ENCODE measurements at regions of chrX and their contacts with region 1.

Region 1: DNA sequence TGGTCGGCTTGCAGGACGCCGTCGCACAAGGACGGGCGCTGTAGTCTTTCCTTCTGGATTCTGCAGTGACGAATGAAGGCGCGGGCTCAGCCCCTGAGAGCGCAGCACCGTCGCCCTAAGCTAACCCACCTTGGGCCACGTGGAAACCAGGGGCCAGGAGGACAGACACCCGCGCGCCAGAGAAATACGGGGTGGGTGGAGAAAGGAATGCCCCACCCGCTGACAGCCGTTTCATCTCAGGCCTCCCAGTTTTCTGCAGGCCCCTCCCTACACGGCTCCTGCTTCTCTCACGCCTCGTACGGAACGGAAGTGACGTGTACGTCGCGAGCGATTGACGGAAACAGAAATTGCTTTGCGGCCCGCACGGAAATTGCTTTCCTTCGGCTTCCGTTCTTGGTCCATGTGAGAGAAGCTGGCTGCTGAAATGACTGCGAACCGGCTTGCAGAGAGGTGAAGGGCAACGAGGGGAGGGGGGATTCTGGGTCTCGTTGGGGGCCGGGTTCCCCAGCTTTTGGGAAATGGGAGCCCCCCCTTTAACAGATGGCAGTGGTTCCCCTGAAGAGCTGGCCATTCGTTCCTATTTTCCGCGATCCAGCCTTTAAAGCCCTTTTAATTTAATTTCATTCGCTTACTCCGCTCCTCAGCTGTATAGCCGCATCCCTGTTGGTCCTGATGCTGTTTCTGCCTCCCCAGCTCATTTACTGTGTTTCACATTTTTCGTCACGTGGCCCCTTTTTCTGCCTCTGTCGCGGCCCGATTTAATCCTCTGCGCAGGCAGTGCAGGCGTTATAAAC is at the start of gene UTP14A:
- DNase-seq: peak; percentile 44 to 86 (median 78)
- ATAC-seq: peak; percentile 98
- H3K4me3 ChIP-seq: peak within 1 kb of the TSS; percentile 85
- H3K4me3 Mint-ChIP-seq: peak within 1 kb of the TSS; percentile 85 to 97 (median 92)
- H3K27ac ChIP-seq: peak within 1 kb of the TSS; percentile 76
- H3K27ac Mint-ChIP-seq: peak within 1 kb of the TSS; percentile 81 to 95 (median 90)
- H3K4me1 ChIP-seq: peaks cover 3 to 8% of the 10 kb centered on the region in 2 donors
- H3K4me1 Mint-ChIP-seq: peaks cover 0 to 17% (median 4%) of the 10 kb centered on the region in 7 donors
- H3K27me3 ChIP-seq: no peaks in the 10 kb centered on the region
- H3K27me3 Mint-ChIP-seq: no peaks in the 10 kb centered on the region
- total RNA-seq, gene UTP14A: 11.3 to 28.6 (median 22.4) TPM

Region 2: DNA sequence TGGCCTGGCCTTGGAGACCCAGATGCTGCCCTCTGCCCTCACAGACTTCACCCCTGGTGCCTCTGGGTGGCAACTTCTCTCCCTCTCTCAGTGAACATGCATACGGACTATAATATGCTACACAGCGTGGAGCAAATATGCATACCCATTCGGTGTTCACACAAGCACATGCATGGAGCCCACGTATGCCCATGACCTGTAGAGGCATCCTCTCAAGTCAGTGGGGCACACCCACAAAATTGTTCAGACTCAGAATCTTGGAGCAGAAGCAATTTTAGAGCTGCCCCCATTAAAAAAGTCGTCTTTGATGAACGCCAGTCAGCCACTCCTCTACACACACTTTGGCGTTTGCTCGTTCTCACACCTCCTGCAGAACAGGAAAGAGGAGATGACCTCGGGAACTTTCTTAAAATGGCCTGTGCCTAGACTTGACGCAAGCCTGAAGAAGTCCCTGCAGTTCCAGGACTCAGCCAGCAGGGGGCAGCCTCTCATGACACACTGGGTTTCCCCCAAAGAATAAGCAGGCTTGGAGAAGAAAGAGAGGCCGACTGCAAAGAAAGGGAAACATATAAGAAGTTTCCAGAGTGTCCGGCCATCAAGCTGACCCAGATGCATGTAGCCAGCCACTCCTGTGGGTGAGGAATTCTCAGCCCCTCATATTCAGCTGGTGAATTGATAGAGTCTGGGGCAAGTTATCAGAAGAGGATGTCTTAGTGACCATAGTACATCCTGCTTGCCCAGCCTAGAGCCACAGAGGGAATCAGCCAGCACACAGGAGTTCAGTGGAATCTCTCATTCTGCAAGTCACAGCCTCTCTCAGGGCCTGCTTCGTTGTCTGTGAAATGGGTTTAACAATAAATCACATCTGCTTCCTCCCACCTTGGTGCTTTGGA is 268.5 kb before region 1 on chrX:
- CTCF ChIA-PET with region 1: interaction called, 3 read pairs
- POLR2A ChIA-PET with region 1: no interaction called
- intact Hi-C with region 1: loop called in 1 of 2 experiments (anchors 5 kb)
- DNase-seq: peak; percentile 48 to 80 (median 63)
- ATAC-seq: peak; percentile 92
- H3K4me3 ChIP-seq: no peak overlapping the region
- H3K4me3 Mint-ChIP-seq: no peak overlapping the region
- H3K27ac ChIP-seq: no peak overlapping the region
- H3K27ac Mint-ChIP-seq: peak overlapping the region in 3 of 9 donors; percentile 34 to 68 (median 55)
- H3K4me1 ChIP-seq: peaks cover 0 to 4% of the 10 kb centered on the region in 2 donors
- H3K4me1 Mint-ChIP-seq: peaks cover 0 to 10% (median 0%) of the 10 kb centered on the region in 7 donors
- H3K27me3 ChIP-seq: no peaks in the 10 kb centered on the region
- H3K27me3 Mint-ChIP-seq: no peaks in the 10 kb centered on the region

Region 3: DNA sequence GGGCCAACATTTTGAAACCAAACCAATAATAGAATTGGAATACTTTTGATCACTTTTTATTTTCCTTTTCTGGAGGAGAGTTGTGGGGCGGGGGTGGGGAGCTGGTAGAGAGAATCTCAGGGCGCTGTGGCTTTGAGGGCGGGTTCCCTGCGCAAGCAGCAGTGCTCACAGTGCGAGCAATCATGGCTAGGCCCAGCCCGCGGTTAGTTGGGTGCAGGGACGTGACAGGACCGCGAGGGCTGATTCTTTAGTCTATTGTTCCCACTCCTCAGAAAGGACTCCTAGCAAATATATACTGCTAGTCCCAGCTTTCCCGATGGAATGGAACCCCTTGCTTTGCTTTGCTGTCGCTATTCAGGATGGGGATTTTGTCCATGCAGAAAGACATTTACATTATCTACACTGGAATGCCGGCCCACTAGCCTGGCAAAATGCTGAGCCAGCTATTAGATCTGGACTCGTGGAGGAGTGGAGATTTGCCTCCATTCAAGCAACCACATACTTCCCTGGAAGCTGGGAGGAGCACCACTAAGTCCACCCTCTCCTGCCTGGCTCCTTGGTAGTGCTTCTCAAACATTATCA is 227.3 kb before region 1 on chrX:
- CTCF ChIA-PET with region 1: no interaction called
- POLR2A ChIA-PET with region 1: no interaction called
- intact Hi-C with region 1: loop called in 1 of 2 experiments (anchors 1 kb)
- DNase-seq: peak in 7 of 9 donors; percentile 6 to 40 (median 34)
- ATAC-seq: peak; percentile 78
- H3K4me3 ChIP-seq: peak overlapping the region; percentile 53
- H3K4me3 Mint-ChIP-seq: peak overlapping the region; percentile 62 to 85 (median 70)
- H3K27ac ChIP-seq: peak overlapping the region; percentile 38
- H3K27ac Mint-ChIP-seq: peak overlapping the region in 7 of 9 donors; percentile 5 to 91 (median 48)
- H3K4me1 ChIP-seq: peaks cover 5 to 14% of the 10 kb centered on the region in 2 donors
- H3K4me1 Mint-ChIP-seq: peaks cover 10 to 36% (median 23%) of the 10 kb centered on the region in 7 donors
- H3K27me3 ChIP-seq: no peaks in the 10 kb centered on the region
- H3K27me3 Mint-ChIP-seq: peaks cover 0 to 21% (median 0%) of the 10 kb centered on the region in 5 donors

Region 4: DNA sequence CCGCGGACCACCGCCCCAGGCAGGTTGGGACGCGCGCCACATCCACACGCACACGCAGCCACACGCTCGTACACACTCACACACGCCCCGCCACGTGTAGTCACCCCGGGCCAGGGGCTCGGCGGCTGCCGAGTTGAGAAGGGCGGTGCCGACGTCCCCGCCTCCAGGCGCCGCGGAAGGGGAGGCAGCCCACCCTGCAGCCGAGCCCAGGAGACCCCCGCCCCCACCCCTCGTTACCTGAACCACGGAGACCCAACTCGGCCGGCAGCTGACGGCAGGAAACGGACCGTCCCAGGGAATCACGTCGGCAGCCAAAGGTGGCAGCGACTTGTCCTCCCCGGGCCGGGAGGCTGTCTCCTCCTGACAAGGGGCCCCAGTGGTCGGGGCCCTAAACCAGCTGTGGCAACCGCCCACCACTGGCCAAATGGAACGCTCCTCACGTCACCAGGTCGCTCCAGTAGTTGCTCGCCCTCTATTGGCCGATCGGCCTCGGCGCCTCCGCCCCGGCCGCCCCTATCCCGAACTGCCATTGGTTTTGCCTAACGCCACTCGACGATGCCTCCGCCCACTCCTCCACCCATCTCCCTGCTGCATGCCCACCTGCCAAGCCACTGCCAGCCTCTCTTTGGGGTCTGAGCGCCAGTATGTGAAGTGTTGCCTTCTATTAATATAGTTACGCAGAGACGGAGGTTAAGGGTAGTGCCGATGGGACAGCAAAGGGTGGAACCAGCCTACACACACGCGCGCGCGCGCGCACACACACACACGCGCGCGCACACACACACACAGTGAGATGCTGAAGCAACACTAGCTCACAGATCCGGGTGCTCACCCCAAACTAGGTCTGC is 62.3 kb before region 1 on chrX and contains the start of gene ZDHHC9:
- CTCF ChIA-PET with region 1: no interaction called
- POLR2A ChIA-PET with region 1: interaction called, 5 read pairs
- intact Hi-C with region 1: loop called (anchors 1 kb)
- DNase-seq: peak; percentile 62 to 85 (median 81)
- ATAC-seq: peak; percentile 98
- H3K4me3 ChIP-seq: peak within 1 kb of the TSS; percentile 95
- H3K4me3 Mint-ChIP-seq: peak within 1 kb of the TSS; percentile 86 to 98 (median 92)
- H3K27ac ChIP-seq: peak within 1 kb of the TSS; percentile 76
- H3K27ac Mint-ChIP-seq: peak within 1 kb of the TSS; percentile 68 to 91 (median 80)
- H3K4me1 ChIP-seq: peaks cover 5 to 15% of the 10 kb centered on the region in 2 donors
- H3K4me1 Mint-ChIP-seq: peaks cover 4 to 39% (median 28%) of the 10 kb centered on the region in 7 donors
- H3K27me3 ChIP-seq: no peaks in the 10 kb centered on the region
- H3K27me3 Mint-ChIP-seq: no peaks in the 10 kb centered on the region
- total RNA-seq, gene ZDHHC9: 4.9 to 9.1 (median 7.1) TPM

Region 5: DNA sequence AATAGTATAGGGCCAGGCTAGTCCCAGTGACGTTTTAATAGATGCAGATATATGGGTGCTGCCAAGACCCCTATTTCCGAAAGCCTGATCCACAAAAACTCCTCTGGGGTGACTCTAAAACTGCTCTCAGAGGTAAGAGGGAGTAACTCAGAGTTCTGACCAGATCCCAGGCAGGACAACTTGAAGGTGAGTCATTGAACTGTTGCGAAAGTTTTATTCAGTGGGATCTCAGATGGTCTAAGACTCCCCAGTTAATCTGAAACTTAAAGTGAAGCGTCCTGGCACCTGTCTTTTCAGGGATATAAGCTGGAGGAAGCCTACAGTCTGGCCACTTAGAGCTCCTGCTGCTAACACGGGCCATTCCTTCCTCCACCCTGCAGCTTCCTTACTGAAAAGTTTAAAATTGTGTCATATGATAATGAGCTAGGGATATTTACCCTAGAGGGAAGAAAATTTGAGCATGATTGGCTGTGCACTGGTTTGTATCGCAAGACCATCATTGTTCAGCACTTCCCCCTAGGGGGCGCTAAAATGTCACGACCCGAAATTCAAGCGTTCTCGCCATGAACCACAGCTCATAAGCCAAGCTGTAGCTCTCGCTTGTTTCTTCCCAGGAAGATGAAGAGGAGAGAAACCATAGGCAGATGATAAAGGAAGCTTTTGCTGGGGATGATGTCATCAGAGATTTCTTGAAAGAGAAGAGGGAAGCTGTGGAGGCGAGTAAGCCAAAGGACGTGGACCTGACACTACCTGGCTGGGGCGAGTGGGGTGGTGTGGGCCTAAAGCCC is 19.5 kb after region 1 on chrX:
- CTCF ChIA-PET with region 1: interaction called, 4 read pairs
- POLR2A ChIA-PET with region 1: no interaction called
- intact Hi-C with region 1: loop called in 1 of 2 experiments (anchors 2 kb)
- DNase-seq: peak; percentile 18 to 74 (median 67)
- ATAC-seq: peak; percentile 89
- H3K4me3 ChIP-seq: no peak overlapping the region
- H3K4me3 Mint-ChIP-seq: no peak overlapping the region
- H3K27ac ChIP-seq: no peak overlapping the region
- H3K27ac Mint-ChIP-seq: peak overlapping the region in 1 of 9 donors; percentile 41
- H3K4me1 ChIP-seq: no peaks in the 10 kb centered on the region
- H3K4me1 Mint-ChIP-seq: peaks cover 0 to 5% (median 0%) of the 10 kb centered on the region in 7 donors
- H3K27me3 ChIP-seq: no peaks in the 10 kb centered on the region
- H3K27me3 Mint-ChIP-seq: no peaks in the 10 kb centered on the region

Region 6: GRCh38 chrX:129982274-129983251 is 76.6 kb after region 1 on chrX and contains the start of gene BCORL1:
- CTCF ChIA-PET with region 1: no interaction called
- POLR2A ChIA-PET with region 1: no interaction called
- intact Hi-C with region 1: loop called (anchors 1 to 2 kb)
- DNase-seq: peak; percentile 62 to 89 (median 84)
- ATAC-seq: peak; percentile 96
- H3K4me3 ChIP-seq: peak within 1 kb of the TSS; percentile 61
- H3K4me3 Mint-ChIP-seq: peak within 1 kb of the TSS in 1 of 10 donors; percentile 85
- H3K27ac ChIP-seq: no peak within 1 kb of the TSS
- H3K27ac Mint-ChIP-seq: peak within 1 kb of the TSS in 7 of 9 donors; percentile 31 to 82 (median 59)
- H3K4me1 ChIP-seq: no peaks in the 10 kb centered on the region
- H3K4me1 Mint-ChIP-seq: peaks cover 19 to 34% (median 27%) of the 10 kb centered on the region in 7 donors
- H3K27me3 ChIP-seq: no peaks in the 10 kb centered on the region
- H3K27me3 Mint-ChIP-seq: peaks cover 0 to 30% (median 0%) of the 10 kb centered on the region in 5 donors
- total RNA-seq, gene BCORL1: 5.8 to 8.9 (median 8.2) TPM

Region 7: GRCh38 chrX:130902783-130903613 is 997.0 kb after region 1 on chrX and contains the start of gene ENOX2:
- CTCF ChIA-PET with region 1: no interaction called
- POLR2A ChIA-PET with region 1: no interaction called
- intact Hi-C with region 1: loop called (anchors 1 to 5 kb)
- DNase-seq: peak; percentile 51 to 90 (median 83)
- ATAC-seq: peak; percentile 98
- H3K4me3 ChIP-seq: peak within 1 kb of the TSS; percentile 79
- H3K4me3 Mint-ChIP-seq: no peak within 1 kb of the TSS
- H3K27ac ChIP-seq: peak within 1 kb of the TSS; percentile 93
- H3K27ac Mint-ChIP-seq: peak within 1 kb of the TSS in 6 of 9 donors; percentile 51 to 91 (median 71)
- H3K4me1 ChIP-seq: peaks cover 0 to 5% of the 10 kb centered on the region in 2 donors
- H3K4me1 Mint-ChIP-seq: peaks cover 5 to 14% (median 12%) of the 10 kb centered on the region in 7 donors
- H3K27me3 ChIP-seq: no peaks in the 10 kb centered on the region
- H3K27me3 Mint-ChIP-seq: no peaks in the 10 kb centered on the region
- total RNA-seq, gene ENOX2: 10.3 to 15.3 (median 12.1) TPM

Measured in naive thymus-derived CD4-positive, alpha-beta T cell (primary cell).